Gastrocnemius medialis (tissue), 4 donors: ENCODE measurements at regions of chr21 and their contacts with region 1.

Region 1: GRCh38 chr21:26967062-26967913 is at the start of gene ADAMTS5:
- DNase-seq: peak; percentile 48 to 59
- ATAC-seq: peak; percentile 54 to 65
- H3K4me3 ChIP-seq: peak within 1 kb of the TSS; percentile 63 to 71 (median 68)
- H3K27ac ChIP-seq: peak within 1 kb of the TSS; percentile 72 to 79 (median 77)
- H3K4me1 ChIP-seq: peaks cover 0 to 19% of the 10 kb centered on the region in 2 donors
- H3K27me3 ChIP-seq: peaks cover 7 to 18% (median 9%) of the 10 kb centered on the region in 3 donors
- CTCF ChIP-seq: no peak
- POLR2A ChIP-seq: peak in 1 of 2 donors; percentile 60
- total RNA-seq, gene ADAMTS5: 4.3 to 9.0 (median 7.4) TPM

Region 2: GRCh38 chr21:26788790-26789189 is 178.5 kb before region 1 on chr21:
- in situ Hi-C with region 1: no loop called
- intact Hi-C with region 1: no loop called
- DNase-seq: peak; percentile 13 to 31
- ATAC-seq: peak; percentile 51 to 55
- H3K4me3 ChIP-seq: no peak overlapping the region
- H3K27ac ChIP-seq: peak overlapping the region in 3 of 4 donors; percentile 55 to 69 (median 69)
- H3K4me1 ChIP-seq: peaks cover 0 to under 1% of the 10 kb centered on the region in 2 donors
- H3K27me3 ChIP-seq: no peaks in the 10 kb centered on the region
- CTCF ChIP-seq: no peak
- POLR2A ChIP-seq: no peak

Region 3: DNA sequence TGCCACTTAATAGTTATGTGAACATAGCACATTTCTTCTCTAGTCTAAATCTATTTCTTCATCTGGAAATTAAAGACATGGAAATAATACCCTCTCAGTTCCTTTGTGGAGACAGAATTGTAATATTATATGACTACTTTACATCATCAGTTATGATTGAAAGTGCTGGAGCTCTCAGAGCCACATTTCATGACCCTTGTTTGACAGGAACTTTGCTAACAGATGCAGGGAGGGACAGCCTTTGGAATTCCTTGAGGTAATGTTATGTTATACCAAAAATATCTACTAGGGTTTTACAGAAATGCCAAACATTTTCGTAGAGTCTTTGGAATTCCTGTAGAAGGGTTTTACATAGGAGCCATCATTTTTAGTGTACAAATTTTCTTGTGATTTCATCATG is 57.0 kb after region 1 on chr21:
- in situ Hi-C with region 1: no loop called
- intact Hi-C with region 1: no loop called
- DNase-seq: no peak
- ATAC-seq: no peak
- H3K4me3 ChIP-seq: no peak overlapping the region
- H3K27ac ChIP-seq: no peak overlapping the region
- H3K4me1 ChIP-seq: no peaks in the 10 kb centered on the region
- H3K27me3 ChIP-seq: no peaks in the 10 kb centered on the region
- CTCF ChIP-seq: no peak
- POLR2A ChIP-seq: no peak

Region 4: GRCh38 chr21:27077501-27077900 is 110.2 kb after region 1 on chr21:
- in situ Hi-C with region 1: no loop called
- intact Hi-C with region 1: loop called (anchors 10 kb)
- DNase-seq: peak; percentile 24 to 36
- ATAC-seq: peak; percentile 64 to 95
- H3K4me3 ChIP-seq: no peak overlapping the region
- H3K27ac ChIP-seq: no peak overlapping the region
- H3K4me1 ChIP-seq: peaks cover 13 to 15% of the 10 kb centered on the region in 2 donors
- H3K27me3 ChIP-seq: no peaks in the 10 kb centered on the region
- CTCF ChIP-seq: no peak
- POLR2A ChIP-seq: no peak

Region 5: DNA sequence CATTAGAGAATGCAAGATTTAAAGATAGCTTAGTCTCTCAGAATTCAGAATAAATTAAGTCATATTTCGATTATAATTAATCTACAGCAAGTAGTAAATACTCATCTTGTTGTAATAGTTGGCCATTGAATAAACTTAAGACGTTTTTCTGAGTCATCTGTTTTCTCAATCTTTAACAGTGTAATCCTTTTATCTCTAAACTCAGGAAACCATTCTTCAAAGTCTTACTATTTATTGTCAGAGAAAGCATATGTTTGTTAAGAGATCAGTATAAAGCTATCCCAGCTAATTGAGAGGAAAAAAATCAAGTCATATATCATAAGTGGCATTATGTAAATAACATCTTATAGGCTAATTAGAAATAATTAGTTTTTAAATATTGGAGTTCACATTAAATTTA is 200.8 kb after region 1 on chr21:
- in situ Hi-C with region 1: no loop called
- intact Hi-C with region 1: loop called (anchors 10 kb)
- DNase-seq: no peak
- ATAC-seq: no peak
- H3K4me3 ChIP-seq: no peak overlapping the region
- H3K27ac ChIP-seq: no peak overlapping the region
- H3K4me1 ChIP-seq: peaks cover 0 to 5% of the 10 kb centered on the region in 2 donors
- H3K27me3 ChIP-seq: no peaks in the 10 kb centered on the region
- CTCF ChIP-seq: no peak
- POLR2A ChIP-seq: no peak

Region 6: GRCh38 chr21:27246741-27247140 is 279.5 kb after region 1 on chr21:
- in situ Hi-C with region 1: no loop called
- intact Hi-C with region 1: loop called (anchors 10 kb)
- DNase-seq: no peak
- ATAC-seq: peak in 1 of 2 donors; percentile 39
- H3K4me3 ChIP-seq: no peak overlapping the region
- H3K27ac ChIP-seq: peak overlapping the region in 3 of 4 donors; percentile 42 to 73 (median 53)
- H3K4me1 ChIP-seq: peaks cover 0 to 4% of the 10 kb centered on the region in 2 donors
- H3K27me3 ChIP-seq: no peaks in the 10 kb centered on the region
- CTCF ChIP-seq: no peak
- POLR2A ChIP-seq: no peak